Activated naive CD4-positive, alpha-beta T cell treated with anti-CD3 and anti-CD28 coated beads for 36 hours (primary cell): ENCODE measurements at regions of chr7 and their contacts with region 1.

Region 1: GRCh38 chr7:23357190-23358093 is 58.3 kb downstream of the MALSU1 start:
- DNase-seq: no peak
- H3K4me3 Mint-ChIP-seq: no peak overlapping the region
- H3K27ac Mint-ChIP-seq: no peak overlapping the region
- H3K4me1 Mint-ChIP-seq: peaks cover 15% of the 10 kb centered on the region
- H3K27me3 Mint-ChIP-seq: peaks cover 3% of the 10 kb centered on the region

Region 2: DNA sequence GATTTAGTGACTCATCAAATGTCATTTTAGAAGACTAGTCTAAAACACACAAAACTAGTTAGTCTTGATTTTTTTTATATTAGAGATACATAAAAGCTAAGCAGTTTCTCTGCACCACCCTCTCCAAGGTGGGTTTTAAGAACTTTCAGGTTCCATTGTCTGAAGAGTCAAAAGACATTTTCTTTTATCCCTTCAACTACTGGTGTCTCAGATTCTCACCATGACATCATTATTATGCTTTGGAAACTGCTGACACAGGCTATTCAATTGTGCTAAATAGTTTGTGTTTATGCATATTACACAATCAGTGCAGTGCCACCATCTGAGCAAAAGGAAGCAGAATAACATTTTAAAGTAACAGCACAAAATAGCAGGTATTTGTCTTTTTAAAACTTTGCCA is 60.6 kb after region 1 on chr7:
- CTCF ChIA-PET with region 1: interaction called, 4 read pairs
- intact Hi-C with region 1: loop called (anchors 2 kb)
- DNase-seq: no peak
- H3K4me3 Mint-ChIP-seq: no peak overlapping the region
- H3K27ac Mint-ChIP-seq: no peak overlapping the region
- H3K4me1 Mint-ChIP-seq: peaks cover 10% of the 10 kb centered on the region
- H3K27me3 Mint-ChIP-seq: peaks cover 3% of the 10 kb centered on the region

Region 3: GRCh38 chr7:23462846-23463245 is 105.4 kb after region 1 on chr7:
- CTCF ChIA-PET with region 1: interaction called, 50 read pairs
- intact Hi-C with region 1: loop called (anchors 1 kb)
- DNase-seq: peak; percentile 56
- H3K4me3 Mint-ChIP-seq: no peak overlapping the region
- H3K27ac Mint-ChIP-seq: no peak overlapping the region
- H3K4me1 Mint-ChIP-seq: peaks cover 5% of the 10 kb centered on the region
- H3K27me3 Mint-ChIP-seq: peaks cover 64% of the 10 kb centered on the region

Region 4: GRCh38 chr7:23523486-23524075 is 166.1 kb after region 1 on chr7:
- CTCF ChIA-PET with region 1: interaction called, 14 read pairs
- intact Hi-C with region 1: no loop called
- DNase-seq: no peak
- H3K4me3 Mint-ChIP-seq: no peak overlapping the region
- H3K27ac Mint-ChIP-seq: no peak overlapping the region
- H3K4me1 Mint-ChIP-seq: peaks cover 57% of the 10 kb centered on the region
- H3K27me3 Mint-ChIP-seq: no peaks in the 10 kb centered on the region

Region 5: DNA sequence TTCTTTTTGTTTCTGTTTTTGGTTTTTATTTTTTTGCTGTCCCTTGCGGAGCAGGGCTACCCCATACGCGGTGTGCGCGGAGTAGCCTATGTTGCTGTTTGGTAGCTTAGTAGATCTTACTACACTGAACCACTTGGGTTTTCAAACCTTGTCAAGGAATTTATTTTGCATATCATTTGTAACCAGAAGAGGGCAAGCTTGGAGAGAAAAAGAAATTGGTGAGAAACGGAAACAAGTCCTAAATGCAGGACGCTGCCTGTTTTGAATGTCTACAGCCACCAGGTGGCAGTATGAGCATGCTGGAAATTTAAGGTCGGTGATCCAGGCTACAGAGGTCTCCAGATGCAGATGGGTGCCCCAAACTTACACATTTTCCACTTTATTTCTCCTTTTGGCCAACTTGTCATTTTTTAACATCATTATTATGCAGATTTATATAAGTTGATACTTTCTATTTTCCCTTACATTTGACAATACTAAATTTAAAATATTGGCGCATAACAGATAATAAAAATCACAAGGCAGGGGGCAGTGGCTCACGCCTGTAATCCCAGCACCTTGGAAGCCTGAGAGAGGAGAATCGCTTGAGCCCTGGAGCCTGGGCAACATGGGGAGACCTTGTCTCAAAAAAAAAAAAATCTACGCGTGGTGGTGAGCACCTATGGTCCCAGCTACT is 189.6 kb after region 1 on chr7:
- CTCF ChIA-PET with region 1: interaction called, 8 read pairs
- intact Hi-C with region 1: loop called (anchors 1 kb)
- DNase-seq: peak; percentile 86
- H3K4me3 Mint-ChIP-seq: no peak overlapping the region
- H3K27ac Mint-ChIP-seq: no peak overlapping the region
- H3K4me1 Mint-ChIP-seq: peaks cover 5% of the 10 kb centered on the region
- H3K27me3 Mint-ChIP-seq: no peaks in the 10 kb centered on the region